HepG2 (cell line): ENCODE measurements at regions of chr18 and their contacts with region 1.

Region 1: GRCh38 chr18:10560450-10561045 is 34.7 kb downstream of the NAPG start:
- DNase-seq: peak; percentile 63
- ATAC-seq: peak; percentile 79
- H3K4me3 ChIP-seq: no peak overlapping the region
- H3K27ac ChIP-seq: no peak overlapping the region
- H3K4me1 ChIP-seq: no peaks in the 10 kb centered on the region
- H3K27me3 ChIP-seq: no peaks in the 10 kb centered on the region
- CTCF ChIP-seq: peak; percentile 74
- EP300 ChIP-seq: no peak
- POLR2A ChIP-seq: no peak
- RAD21 ChIP-seq: peak; percentile 64; the same call in 1 of the 2 replicates

Region 2: DNA sequence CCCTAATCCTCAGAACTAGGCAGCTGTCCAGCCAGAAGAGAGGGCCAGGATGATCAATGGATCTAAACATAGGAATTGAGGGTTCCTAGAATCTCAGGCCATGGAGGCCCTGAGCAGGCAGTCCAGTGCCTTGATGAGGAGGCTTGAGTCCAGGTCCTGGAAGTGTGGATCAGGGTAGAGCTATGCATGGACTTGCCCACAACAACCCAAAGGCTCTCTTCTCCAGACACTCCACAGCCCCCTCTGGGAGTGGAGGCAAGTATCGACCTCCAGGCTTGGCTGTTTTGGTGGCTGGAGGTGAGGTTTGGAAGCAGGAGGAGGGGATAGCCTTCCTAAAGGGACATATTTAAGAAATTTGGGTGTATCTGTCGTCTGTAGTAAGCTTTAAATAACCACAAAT is 11.0 kb after region 1 on chr18:
- CTCF ChIA-PET with region 1: no interaction called
- POLR2A ChIA-PET with region 1: no interaction called
- in situ Hi-C with region 1: no loop called
- intact Hi-C with region 1: no loop called
- DNase-seq: no peak
- ATAC-seq: peak; percentile 33; the same call in 2 of the 3 replicates
- H3K4me3 ChIP-seq: no peak overlapping the region
- H3K27ac ChIP-seq: no peak overlapping the region
- H3K4me1 ChIP-seq: no peaks in the 10 kb centered on the region
- H3K27me3 ChIP-seq: no peaks in the 10 kb centered on the region
- CTCF ChIP-seq: no peak
- EP300 ChIP-seq: no peak
- POLR2A ChIP-seq: no peak
- RAD21 ChIP-seq: no peak

Region 3: DNA sequence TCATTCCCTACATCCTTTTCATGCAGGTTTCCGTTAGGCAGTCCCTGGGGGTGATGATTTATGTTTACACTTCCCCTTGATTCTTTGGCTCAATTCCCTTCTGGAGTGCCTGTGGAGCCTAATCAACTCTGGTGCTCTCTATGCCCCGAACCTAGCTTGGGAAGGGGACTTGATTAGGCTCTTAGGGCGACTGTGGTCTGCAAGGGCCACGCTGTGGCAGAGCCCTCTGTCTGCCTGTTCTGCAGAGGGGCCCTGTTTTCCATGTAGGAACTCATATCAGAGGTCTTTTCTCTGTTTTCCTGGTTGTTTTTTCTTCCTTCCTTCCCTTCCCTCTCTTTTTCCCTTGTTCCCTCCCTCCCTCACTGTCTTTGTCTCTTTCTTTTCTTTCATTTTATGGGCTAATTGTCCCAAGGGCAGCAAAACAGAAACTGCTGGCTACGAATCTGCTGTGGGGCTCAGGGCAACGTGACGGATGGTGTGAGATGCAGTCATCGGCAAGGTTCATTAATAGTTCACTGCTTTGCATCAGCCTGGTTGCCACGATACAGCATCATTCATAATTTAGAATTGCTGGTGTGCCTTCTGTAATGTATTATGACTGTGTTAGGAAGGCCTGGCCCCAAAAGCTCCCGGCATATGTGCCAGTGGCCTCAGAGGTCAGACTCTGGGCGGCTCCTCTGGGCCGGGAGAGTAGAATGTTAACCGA is 99.8 kb after region 1 on chr18:
- CTCF ChIA-PET with region 1: no interaction called
- POLR2A ChIA-PET with region 1: no interaction called
- in situ Hi-C with region 1: no loop called
- intact Hi-C with region 1: loop called (anchors 10 kb)
- DNase-seq: no peak
- ATAC-seq: peak; percentile 50
- H3K4me3 ChIP-seq: no peak overlapping the region
- H3K27ac ChIP-seq: no peak overlapping the region
- H3K4me1 ChIP-seq: peaks cover 8% of the 10 kb centered on the region; the same call in 1 of the 2 replicates
- H3K27me3 ChIP-seq: peaks cover 0 to 13% of the 10 kb centered on the region in 2 experiments; a peak in 2 of 5 replicates
- CTCF ChIP-seq: no peak
- EP300 ChIP-seq: no peak
- POLR2A ChIP-seq: no peak
- RAD21 ChIP-seq: no peak

Region 4: DNA sequence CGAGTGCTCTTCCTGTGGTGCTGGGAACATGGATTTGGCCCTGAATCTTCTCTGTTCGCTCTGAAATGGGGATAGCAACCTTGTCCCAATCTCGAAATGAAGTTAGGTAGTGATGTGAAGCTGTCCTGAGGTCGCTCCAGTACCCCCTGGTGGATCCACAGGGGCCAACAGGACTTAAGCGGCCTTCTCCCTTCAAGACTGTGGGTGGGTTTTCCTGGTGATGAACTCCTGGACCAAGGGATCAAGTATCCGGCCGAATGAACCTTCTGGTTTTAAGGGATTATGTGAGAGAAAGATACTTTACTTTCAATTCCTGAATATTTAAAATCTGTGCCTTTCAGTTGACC is 121.8 kb after region 1 on chr18:
- CTCF ChIA-PET with region 1: no interaction called
- POLR2A ChIA-PET with region 1: no interaction called
- in situ Hi-C with region 1: no loop called
- intact Hi-C with region 1: loop called (anchors 1 kb)
- DNase-seq: no peak
- ATAC-seq: peak; percentile 62
- H3K4me3 ChIP-seq: no peak overlapping the region
- H3K27ac ChIP-seq: no peak overlapping the region
- H3K4me1 ChIP-seq: no peaks in the 10 kb centered on the region
- H3K27me3 ChIP-seq: no peaks in the 10 kb centered on the region
- CTCF ChIP-seq: peak; percentile 29; the same call in 1 of the 2 replicates
- EP300 ChIP-seq: no peak
- POLR2A ChIP-seq: no peak
- RAD21 ChIP-seq: no peak